Astrocyte of the cerebellum (primary cell): ENCODE measurements at regions of chr21 and their contacts with region 1.

Region 1: DNA sequence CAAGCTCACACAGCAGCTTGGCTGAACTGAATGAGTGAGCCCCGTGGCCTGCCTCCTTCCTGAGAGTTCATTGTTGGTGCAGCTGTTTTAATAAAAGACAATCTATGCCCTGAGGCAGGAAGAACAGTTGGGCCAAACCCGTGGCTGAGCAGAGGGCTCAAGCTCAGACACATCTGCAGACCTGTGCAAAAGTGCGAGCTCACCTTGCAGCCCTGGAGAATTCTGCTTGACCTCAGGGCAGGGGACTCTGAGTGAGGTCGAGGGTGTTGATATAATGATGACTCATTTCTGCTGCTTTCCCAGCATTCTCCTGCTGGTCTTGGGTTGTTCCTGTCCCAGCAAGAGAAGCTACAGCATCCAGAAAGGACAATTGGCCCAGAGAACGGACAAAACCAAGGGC is 61.0 kb downstream of the ATP5PO start:
- DNase-seq: no peak
- H3K4me3 ChIP-seq: no peak overlapping the region
- CTCF ChIP-seq: no peak

Region 2: GRCh38 chr21:33901412-33902288 is 47.0 kb after region 1 on chr21:
- in situ Hi-C with region 1: loop called (anchors 5 kb)
- DNase-seq: peak; percentile 57
- H3K4me3 ChIP-seq: no peak overlapping the region
- CTCF ChIP-seq: peak; percentile 78

Region 3: GRCh38 chr21:33936301-33937038 is 81.9 kb after region 1 on chr21:
- in situ Hi-C with region 1: no loop called
- DNase-seq: no peak
- H3K4me3 ChIP-seq: no peak overlapping the region
- CTCF ChIP-seq: no peak